ENCODE measurements at regions of chr7 and their contacts with region 1.

Region 1: GRCh38 chr7:101815835-101816493 is 1.5 kb upstream of the CUX1 start:
- DNase-seq: peak; percentile 66
- H3K4me3 Mint-ChIP-seq: peak overlapping the region; percentile 71
- H3K27ac Mint-ChIP-seq: no peak overlapping the region
- H3K4me1 Mint-ChIP-seq: no peaks in the 10 kb centered on the region
- H3K27me3 Mint-ChIP-seq: no peaks in the 10 kb centered on the region
- CTCF ChIP-seq: no peak

Region 2: GRCh38 chr7:101542527-101543241 is 273.3 kb before region 1 on chr7:
- CTCF ChIA-PET with region 1: interaction called, 4 read pairs
- intact Hi-C with region 1: loop called (anchors 5 kb)
- DNase-seq: peak; percentile 77
- H3K4me3 Mint-ChIP-seq: no peak overlapping the region
- H3K27ac Mint-ChIP-seq: no peak overlapping the region
- H3K4me1 Mint-ChIP-seq: no peaks in the 10 kb centered on the region
- H3K27me3 Mint-ChIP-seq: peaks cover 9% of the 10 kb centered on the region
- CTCF ChIP-seq: peak; percentile 87

Region 3: DNA sequence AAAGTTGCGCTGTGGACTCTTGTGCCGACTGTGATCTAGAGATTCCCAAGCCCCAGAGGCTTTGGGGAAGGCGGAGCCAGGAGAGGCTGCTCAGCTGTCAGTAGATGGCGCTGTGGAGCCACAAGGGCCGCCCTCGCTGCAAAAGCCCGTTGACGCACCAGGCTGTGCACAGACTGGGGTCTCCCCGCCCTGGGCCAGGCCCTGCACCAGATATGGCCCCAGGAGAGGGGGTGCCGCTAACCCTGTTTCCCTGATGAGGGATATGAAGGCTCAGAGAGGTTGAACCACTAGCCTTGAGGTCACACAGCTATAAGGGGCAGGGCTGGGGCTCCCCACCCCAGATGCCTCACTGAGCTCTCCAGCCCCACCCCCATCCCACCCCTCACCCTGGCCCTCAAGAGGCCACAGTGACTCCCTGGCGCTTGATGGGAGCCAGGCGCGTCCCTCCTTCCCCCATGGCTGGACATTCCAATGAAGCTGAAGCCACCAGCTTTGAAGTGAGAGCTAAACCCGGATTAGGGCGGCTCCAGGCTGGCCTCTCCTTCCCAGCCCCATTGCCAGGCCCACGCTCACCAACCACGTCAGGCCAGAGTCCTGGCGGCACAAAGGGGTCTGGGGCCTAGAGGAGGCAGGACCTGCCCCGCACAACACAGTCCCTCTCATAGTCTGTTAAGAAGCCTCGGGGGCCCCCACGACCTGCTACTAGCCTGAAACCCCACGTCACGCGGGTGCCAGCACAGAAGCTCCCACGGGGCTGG is 213.3 kb before region 1 on chr7:
- CTCF ChIA-PET with region 1: interaction called, 3 read pairs
- intact Hi-C with region 1: loop called (anchors 10 kb)
- DNase-seq: peak; percentile 82
- H3K4me3 Mint-ChIP-seq: no peak overlapping the region
- H3K27ac Mint-ChIP-seq: no peak overlapping the region
- H3K4me1 Mint-ChIP-seq: peaks cover 11% of the 10 kb centered on the region
- H3K27me3 Mint-ChIP-seq: no peaks in the 10 kb centered on the region
- CTCF ChIP-seq: peak; percentile 57

Region 4: GRCh38 chr7:101688183-101688831 is 127.7 kb before region 1 on chr7:
- CTCF ChIA-PET with region 1: interaction called, 3 read pairs
- intact Hi-C with region 1: loop called (anchors 5 kb)
- DNase-seq: peak; percentile 79
- H3K4me3 Mint-ChIP-seq: no peak overlapping the region
- H3K27ac Mint-ChIP-seq: no peak overlapping the region
- H3K4me1 Mint-ChIP-seq: peaks cover 10% of the 10 kb centered on the region
- H3K27me3 Mint-ChIP-seq: no peaks in the 10 kb centered on the region
- CTCF ChIP-seq: peak; percentile 74

Region 5: GRCh38 chr7:101743241-101743994 is 72.5 kb before region 1 on chr7:
- CTCF ChIA-PET with region 1: no interaction called
- intact Hi-C with region 1: loop called (anchors 10 kb)
- DNase-seq: peak; percentile 40
- H3K4me3 Mint-ChIP-seq: peak overlapping the region; percentile 74
- H3K27ac Mint-ChIP-seq: no peak overlapping the region
- H3K4me1 Mint-ChIP-seq: peaks cover 11% of the 10 kb centered on the region
- H3K27me3 Mint-ChIP-seq: no peaks in the 10 kb centered on the region
- CTCF ChIP-seq: peak; percentile 31

Region 6: DNA sequence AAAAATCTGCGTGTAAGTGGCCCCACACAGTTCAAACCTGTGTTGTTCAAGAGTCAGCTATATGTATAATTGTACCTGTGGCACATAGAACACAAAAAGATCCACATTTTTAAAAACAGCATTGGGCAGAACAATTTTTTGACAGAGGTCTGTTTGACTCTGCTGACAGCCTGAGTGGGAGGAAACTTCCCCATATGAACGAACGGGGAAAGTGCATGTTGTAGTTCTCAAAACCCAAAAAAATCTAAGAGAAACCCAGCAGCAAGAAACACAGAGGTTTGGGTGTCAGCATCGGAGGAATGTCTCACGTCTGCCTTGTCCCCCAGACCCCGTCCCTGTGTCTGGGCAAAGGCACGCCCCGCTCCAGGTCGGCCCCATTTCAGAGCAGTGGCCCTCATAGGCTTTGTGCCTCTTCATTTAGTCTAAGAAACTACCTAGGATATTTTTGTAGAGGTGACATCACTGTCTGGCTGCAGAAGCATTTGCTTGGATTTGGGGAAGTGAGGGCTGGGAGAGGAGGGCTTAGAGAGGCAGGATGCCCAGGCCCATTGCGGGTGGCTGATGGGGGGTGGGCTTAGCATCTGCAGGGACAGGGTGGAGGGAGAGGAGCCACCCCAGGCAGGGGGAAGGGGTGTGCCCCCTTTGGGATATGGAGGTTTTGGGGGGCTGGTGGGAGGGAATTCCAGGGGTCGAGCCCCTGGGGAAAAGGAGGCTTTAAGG is 12.5 kb after region 1 on chr7:
- CTCF ChIA-PET with region 1: no interaction called
- intact Hi-C with region 1: no loop called
- DNase-seq: no peak
- H3K4me3 Mint-ChIP-seq: no peak overlapping the region
- H3K27ac Mint-ChIP-seq: no peak overlapping the region
- H3K4me1 Mint-ChIP-seq: no peaks in the 10 kb centered on the region
- H3K27me3 Mint-ChIP-seq: no peaks in the 10 kb centered on the region
- CTCF ChIP-seq: no peak

Region 7: GRCh38 chr7:102236592-102237287 is 420.8 kb after region 1 on chr7:
- CTCF ChIA-PET with region 1: no interaction called
- intact Hi-C with region 1: loop called (anchors 10 kb)
- DNase-seq: peak; percentile 56
- H3K4me3 Mint-ChIP-seq: no peak overlapping the region
- H3K27ac Mint-ChIP-seq: no peak overlapping the region
- H3K4me1 Mint-ChIP-seq: no peaks in the 10 kb centered on the region
- H3K27me3 Mint-ChIP-seq: no peaks in the 10 kb centered on the region
- CTCF ChIP-seq: peak; percentile 55

Region 8: DNA sequence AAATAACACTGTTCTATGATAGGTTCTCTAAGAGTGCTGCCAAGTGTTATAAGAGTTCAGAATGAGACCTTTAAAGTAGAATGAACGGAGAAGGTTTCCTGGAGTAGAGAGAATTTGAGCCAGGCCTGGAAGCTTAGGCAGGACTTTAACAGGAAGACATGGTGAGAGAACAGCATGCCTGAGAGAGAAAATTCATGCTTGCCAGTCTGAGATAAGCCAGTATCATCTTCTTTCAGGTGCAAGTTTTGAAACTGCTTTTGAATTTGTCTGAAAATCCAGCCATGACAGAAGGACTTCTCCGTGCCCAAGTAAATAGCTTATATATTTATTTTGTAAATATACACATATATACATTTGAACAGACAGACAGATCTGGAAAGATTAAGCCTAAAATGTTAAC is 1281.1 kb after region 1 on chr7:
- CTCF ChIA-PET with region 1: no interaction called
- intact Hi-C with region 1: no loop called
- DNase-seq: no peak
- H3K4me3 Mint-ChIP-seq: no peak overlapping the region
- H3K27ac Mint-ChIP-seq: no peak overlapping the region
- H3K4me1 Mint-ChIP-seq: no peaks in the 10 kb centered on the region
- H3K27me3 Mint-ChIP-seq: no peaks in the 10 kb centered on the region
- CTCF ChIP-seq: no peak

Measured in Calu3 (cell line).